Aorta (tissue), 5 donors: ENCODE measurements at regions of chr2 and their contacts with region 1.

Region 1: DNA sequence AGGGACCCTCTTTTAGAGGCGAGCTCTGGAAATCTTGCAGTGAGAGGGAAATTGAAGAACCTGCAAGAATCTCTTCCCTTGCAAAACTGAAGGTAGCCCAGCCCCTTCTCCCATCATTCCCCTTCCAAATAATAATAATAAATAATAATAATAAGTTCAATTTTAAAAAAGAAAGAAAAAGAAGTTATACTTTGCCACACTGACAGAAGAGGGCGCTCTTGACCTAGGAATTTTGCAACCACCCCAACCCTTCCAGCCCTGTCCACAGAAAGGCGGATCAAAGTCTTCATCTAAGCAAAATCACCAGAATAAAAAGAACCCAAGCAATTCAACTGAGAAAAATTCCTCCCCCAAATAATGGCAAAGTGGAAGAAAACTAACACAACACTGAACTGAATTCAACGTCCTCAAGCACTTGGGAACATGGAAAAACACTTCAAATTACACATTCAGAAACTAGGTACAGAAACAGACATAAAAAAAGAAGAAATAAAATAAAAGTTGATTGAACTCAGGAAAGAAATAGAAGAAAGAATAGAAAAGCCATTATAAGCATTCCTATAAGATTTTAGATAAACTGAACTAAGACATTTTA is 98.9 kb upstream of the GLS start:
- DNase-seq: no peak
- ATAC-seq: no peak
- H3K4me3 ChIP-seq: no peak overlapping the region
- H3K27ac ChIP-seq: no peak overlapping the region
- H3K4me1 ChIP-seq: peaks cover 0 to 5% of the 10 kb centered on the region in 2 donors
- H3K27me3 ChIP-seq: no peaks in the 10 kb centered on the region

Region 2: DNA sequence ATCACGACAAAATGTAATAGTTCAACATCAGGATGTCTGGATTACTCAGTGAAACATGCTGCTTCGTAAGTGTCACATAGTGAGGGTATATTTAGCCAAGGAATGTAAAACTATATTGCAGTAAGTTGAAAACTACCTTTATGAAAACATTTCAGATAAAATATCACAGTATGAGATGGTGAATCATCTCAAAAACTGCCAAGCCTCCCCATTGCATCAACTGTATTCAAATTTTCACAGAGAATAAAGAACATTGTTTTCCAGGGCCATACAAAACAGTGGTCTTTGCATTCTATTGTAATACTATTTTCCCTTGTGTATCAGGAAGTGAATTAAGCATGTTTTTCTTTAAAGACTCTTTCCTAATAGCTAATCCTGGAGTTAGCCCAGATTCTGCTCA is 671.6 kb before region 1 on chr2:
- intact Hi-C with region 1: no loop called
- DNase-seq: no peak
- ATAC-seq: no peak
- H3K4me3 ChIP-seq: no peak overlapping the region
- H3K27ac ChIP-seq: no peak overlapping the region
- H3K4me1 ChIP-seq: no peaks in the 10 kb centered on the region
- H3K27me3 ChIP-seq: no peaks in the 10 kb centered on the region

Region 3: DNA sequence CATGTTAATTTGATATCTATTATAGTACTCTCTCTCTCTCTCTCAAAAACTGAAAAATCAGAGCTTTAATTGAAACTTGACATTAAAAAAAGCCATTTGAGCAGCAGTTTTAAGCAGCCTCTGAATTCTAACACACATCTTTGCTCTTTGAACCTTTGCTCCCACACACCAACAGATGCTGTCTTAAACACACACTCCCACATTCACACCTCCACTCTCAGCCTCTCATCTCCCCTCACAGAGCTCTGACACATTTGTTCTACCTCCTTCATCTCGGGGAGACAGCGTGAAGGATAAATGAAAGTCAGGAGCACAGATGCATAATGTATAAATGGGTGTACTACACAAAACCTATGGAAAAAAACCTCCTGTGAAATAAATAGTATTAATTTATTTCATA is 37.7 kb before region 1 on chr2:
- intact Hi-C with region 1: no loop called
- DNase-seq: no peak
- ATAC-seq: no peak
- H3K4me3 ChIP-seq: no peak overlapping the region
- H3K27ac ChIP-seq: no peak overlapping the region
- H3K4me1 ChIP-seq: no peaks in the 10 kb centered on the region
- H3K27me3 ChIP-seq: no peaks in the 10 kb centered on the region

Region 4: DNA sequence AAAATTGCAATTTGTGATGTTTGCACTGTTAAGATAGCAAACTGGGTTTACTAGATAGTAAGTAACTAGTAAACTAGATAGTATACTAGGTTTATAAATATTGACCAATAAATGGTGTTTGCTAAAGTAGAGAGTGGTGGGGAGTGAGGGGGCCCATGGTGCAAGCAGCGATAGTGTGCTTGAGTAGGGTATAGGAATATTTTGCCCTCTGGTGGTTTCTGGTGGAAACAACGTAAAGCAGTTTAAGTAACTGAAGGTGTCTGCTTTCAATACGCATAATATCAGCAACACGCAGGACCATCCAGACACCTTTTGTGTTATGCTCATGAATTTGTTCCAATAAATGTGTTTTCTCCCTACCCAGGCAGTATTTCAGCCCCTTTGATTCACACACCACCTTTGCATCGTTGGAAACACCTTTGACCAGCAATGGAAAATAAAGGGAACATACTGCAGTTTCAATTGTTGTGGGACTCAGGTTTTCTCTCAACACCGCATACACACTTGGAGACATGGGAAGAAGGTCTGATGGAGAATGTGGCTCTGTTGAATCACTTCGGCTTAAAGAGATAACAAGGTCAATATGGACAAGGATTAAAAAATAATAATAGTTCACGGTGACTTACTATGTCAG is 248.9 kb after region 1 on chr2:
- intact Hi-C with region 1: loop called (anchors 2 to 5 kb)
- DNase-seq: no peak
- ATAC-seq: peak; percentile 66
- H3K4me3 ChIP-seq: no peak overlapping the region
- H3K27ac ChIP-seq: no peak overlapping the region
- H3K4me1 ChIP-seq: no peaks in the 10 kb centered on the region
- H3K27me3 ChIP-seq: no peaks in the 10 kb centered on the region